Mammary epithelial cell (primary cell): ENCODE measurements at regions of chr22 and their contacts with region 1.

Region 1: GRCh38 chr22:19986410-19987341 is 29.9 kb downstream of the ARVCF start:
- DNase-seq: peak; percentile 72
- H3K4me3 ChIP-seq: peak overlapping the region; percentile 66 to 79 (median 73)
- H3K27ac ChIP-seq: no peak overlapping the region
- H3K4me1 ChIP-seq: peaks cover 45% of the 10 kb centered on the region
- H3K27me3 ChIP-seq: no peaks in the 10 kb centered on the region
- CTCF ChIP-seq: no peak

Region 2: DNA sequence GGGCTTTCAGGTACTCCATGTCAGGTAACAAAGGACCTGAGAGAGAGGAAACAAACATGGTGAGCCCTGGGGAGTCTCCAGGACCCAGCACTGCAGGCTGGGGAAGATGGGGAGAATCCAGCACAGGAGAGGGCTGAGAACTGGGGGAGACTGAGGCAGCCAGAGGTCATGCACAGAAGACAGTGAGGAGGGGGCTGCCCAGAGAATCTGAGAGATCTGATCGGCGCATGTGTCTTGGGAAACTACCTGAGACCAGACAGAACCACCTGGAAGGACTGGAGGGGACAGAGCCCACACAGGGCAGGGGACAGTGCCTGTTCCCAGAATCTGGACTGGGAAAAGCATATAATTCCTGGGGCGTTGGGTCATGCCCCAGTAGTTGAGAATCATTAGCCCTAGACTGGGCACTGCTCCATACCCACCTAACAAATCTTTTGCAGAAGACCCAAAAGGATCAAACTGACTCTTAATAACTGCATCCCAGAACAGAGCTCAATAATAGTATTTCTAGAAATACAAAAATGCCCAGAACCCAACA is 65.1 kb before region 1 on chr22:
- CTCF ChIA-PET with region 1: no interaction called
- dilution Hi-C with region 1: loop called (anchors 5 kb)
- in situ Hi-C with region 1: no loop called
- intact Hi-C with region 1: no loop called
- DNase-seq: no peak
- H3K4me3 ChIP-seq: no peak overlapping the region
- H3K27ac ChIP-seq: no peak overlapping the region
- H3K4me1 ChIP-seq: no peaks in the 10 kb centered on the region
- H3K27me3 ChIP-seq: no peaks in the 10 kb centered on the region
- CTCF ChIP-seq: no peak

Region 3: DNA sequence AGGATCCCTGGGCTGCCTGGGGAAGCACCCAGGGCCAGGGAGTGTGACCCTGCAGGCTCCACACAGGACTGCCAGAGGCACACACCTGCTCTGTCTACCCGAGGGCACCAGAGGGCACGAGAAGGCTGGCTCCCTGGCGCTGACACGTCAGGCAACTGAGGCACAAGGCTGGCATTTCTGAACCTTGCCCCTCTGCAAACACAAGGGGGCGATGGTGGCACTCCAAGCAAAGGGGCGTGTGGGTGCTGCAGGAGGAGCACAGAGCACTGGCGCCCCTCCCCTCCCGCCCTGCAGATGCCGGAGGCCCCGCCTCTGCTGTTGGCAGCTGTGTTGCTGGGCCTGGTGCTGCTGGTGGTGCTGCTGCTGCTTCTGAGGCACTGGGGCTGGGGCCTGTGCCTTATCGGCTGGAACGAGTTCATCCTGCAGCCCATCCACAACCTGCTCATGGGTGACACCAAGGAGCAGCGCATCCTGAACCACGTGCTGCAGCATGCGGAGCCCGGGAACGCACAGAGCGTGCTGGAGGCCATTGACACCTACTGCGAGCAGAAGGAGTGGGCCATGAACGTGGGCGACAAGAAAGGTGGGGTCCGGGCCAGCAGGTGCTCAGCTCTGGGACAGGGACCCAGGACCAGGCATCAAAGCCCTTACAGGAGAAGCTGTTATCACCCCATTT is 24.3 kb before region 1 on chr22:
- CTCF ChIA-PET with region 1: no interaction called
- dilution Hi-C with region 1: no loop called
- in situ Hi-C with region 1: no loop called
- intact Hi-C with region 1: loop called (anchors 1 kb)
- DNase-seq: peak; percentile 81
- H3K4me3 ChIP-seq: peak overlapping the region in 2 of 3 experiments; percentile 7 to 44
- H3K27ac ChIP-seq: peak overlapping the region; percentile 2
- H3K4me1 ChIP-seq: peaks cover 50% of the 10 kb centered on the region
- H3K27me3 ChIP-seq: no peaks in the 10 kb centered on the region
- CTCF ChIP-seq: peak; percentile 60 to 70

Region 4: DNA sequence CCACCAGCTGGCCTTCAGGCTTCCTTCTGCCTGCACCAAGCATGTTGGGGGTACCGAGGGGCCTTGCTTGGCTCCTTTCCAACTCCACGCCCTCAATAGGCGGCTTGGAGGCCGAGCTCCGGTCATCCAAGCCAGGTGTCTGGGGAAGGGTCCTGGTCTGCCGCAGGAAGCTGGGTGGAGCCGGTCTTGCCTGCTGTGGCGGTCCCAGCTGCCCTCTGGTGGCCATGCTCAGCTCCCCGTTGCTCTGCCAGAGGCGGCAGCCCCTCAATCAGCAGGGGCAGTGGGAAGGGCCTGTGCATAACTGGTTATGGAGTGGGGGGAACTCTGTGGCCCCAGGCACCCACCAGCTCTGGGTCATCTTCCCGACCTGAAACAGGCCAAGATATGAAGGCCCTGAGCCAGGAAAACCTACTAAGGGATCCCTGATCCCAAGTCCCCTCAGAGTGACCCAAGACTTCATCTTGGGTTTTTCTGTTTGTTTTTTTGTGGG is 26.8 kb after region 1 on chr22:
- CTCF ChIA-PET with region 1: interaction called, 6 read pairs
- dilution Hi-C with region 1: no loop called
- in situ Hi-C with region 1: no loop called
- intact Hi-C with region 1: loop called (anchors 2 kb)
- DNase-seq: no peak
- H3K4me3 ChIP-seq: no peak overlapping the region
- H3K27ac ChIP-seq: no peak overlapping the region
- H3K4me1 ChIP-seq: peaks cover 33% of the 10 kb centered on the region
- H3K27me3 ChIP-seq: no peaks in the 10 kb centered on the region
- CTCF ChIP-seq: peak; percentile 57 to 82

Region 5: GRCh38 chr22:20020533-20021195 is 34.0 kb after region 1 on chr22 and contains the start of gene TANGO2:
- CTCF ChIA-PET with region 1: no interaction called
- dilution Hi-C with region 1: loop called (anchors 5 kb)
- in situ Hi-C with region 1: no loop called
- intact Hi-C with region 1: no loop called
- DNase-seq: peak; percentile 89
- H3K4me3 ChIP-seq: peak within 1 kb of the TSS; percentile 82 to 90 (median 85)
- H3K27ac ChIP-seq: peak within 1 kb of the TSS; percentile 33
- H3K4me1 ChIP-seq: peaks cover 23% of the 10 kb centered on the region
- H3K27me3 ChIP-seq: no peaks in the 10 kb centered on the region
- CTCF ChIP-seq: no peak
- total RNA-seq, gene TANGO2: 22.5 to 45.7 TPM

Region 6: DNA sequence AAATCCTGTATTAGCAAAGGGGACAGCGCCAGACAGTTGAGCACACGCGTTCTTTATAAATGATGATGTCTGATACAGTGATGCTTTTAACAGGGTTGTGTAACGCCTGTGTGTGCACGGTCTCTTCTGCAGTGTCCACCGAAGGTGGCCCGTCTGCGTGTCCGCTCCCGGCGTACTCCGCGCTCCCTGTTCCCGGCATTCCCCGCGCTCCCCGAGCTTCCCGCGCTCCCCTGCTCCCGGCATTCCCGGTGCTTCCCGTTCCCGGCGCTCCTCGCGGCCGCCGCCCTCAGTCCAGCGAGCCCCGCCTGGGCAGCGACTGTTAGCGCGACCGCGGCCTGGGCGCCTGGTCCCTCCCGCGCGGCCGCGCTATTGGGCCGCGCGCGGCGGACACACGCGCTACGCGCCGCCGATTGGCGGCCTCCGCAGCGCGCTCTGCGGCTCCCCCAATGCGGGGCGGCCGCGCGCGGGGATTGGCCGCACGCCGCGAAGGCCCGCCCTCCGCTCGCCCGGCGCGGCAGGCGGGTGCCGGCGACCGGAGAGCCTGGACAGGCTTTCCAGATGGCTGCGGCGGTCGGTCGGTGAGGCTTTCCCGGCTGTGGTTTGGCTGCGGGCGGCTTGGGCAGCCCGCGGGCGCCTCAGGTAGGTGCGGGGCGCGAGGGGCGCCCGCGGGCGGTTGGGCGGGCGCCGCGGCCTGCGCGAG is 93.2 kb after region 1 on chr22 and contains the start of gene DGCR8:
- CTCF ChIA-PET with region 1: no interaction called
- dilution Hi-C with region 1: no loop called
- in situ Hi-C with region 1: no loop called
- intact Hi-C with region 1: loop called (anchors 1 kb)
- DNase-seq: peak; percentile 96
- H3K4me3 ChIP-seq: peak within 1 kb of the TSS; percentile 67 to 73 (median 73)
- H3K27ac ChIP-seq: peak within 1 kb of the TSS; percentile 81
- H3K4me1 ChIP-seq: peaks cover 18% of the 10 kb centered on the region
- H3K27me3 ChIP-seq: no peaks in the 10 kb centered on the region
- CTCF ChIP-seq: no peak
- total RNA-seq, gene DGCR8: 23.0 to 40.4 TPM

Region 7: GRCh38 chr22:20111045-20111688 is 124.5 kb after region 1 on chr22:
- CTCF ChIA-PET with region 1: no interaction called
- dilution Hi-C with region 1: loop called (anchors 5 kb)
- in situ Hi-C with region 1: no loop called
- intact Hi-C with region 1: loop called (anchors 5 kb)
- DNase-seq: no peak
- H3K4me3 ChIP-seq: no peak overlapping the region
- H3K27ac ChIP-seq: no peak overlapping the region
- H3K4me1 ChIP-seq: peaks cover 8% of the 10 kb centered on the region
- H3K27me3 ChIP-seq: no peaks in the 10 kb centered on the region
- CTCF ChIP-seq: peak; percentile 34 to 38